ENCODE measurements at regions of chr5 and their contacts with region 1.

Region 1: DNA sequence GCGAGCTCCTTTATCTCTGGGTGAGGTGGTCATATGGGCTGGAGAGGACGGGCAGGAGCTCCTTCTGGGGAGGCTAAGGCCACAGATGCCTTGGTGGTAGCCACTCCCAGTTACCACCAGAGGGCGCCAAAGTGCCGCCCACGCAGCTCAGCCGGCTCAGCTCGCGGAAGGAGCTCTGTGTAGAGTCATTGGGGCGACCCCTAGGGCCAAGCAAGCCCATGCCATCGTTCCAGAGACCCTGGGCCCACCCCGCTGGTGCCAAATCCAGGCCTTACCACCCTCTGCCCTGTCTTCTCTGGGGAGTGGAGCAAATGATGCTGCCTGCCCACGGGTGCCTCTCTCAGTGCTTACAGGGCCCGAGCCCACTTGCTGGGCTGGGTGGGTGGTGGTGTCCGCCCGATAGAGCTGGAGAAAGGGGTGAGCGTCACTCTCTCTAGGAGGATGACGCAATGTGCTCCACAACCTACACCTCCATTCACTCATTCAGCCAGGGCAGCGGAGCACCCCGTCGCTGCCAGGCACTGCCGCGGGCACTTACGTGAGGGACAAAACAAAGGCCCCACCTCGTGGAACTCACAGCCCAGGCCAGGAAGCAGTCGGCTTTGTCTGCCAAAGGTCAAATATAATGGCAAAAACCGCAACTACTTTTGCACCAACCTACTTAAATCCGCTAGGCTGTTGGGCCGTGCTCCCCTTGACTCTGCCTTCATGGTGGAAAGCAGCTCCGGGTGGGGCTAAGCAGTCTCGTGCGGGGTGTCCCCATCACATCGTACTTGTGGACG is 13.8 kb downstream of the TSPAN17 start:
- DNase-seq: peak; percentile 79
- H3K4me3 ChIP-seq: no peak overlapping the region
- H3K27ac ChIP-seq: no peak overlapping the region
- H3K4me1 ChIP-seq: no peaks in the 10 kb centered on the region
- H3K27me3 ChIP-seq: no peaks in the 10 kb centered on the region
- CTCF ChIP-seq: peak; percentile 91

Region 2: DNA sequence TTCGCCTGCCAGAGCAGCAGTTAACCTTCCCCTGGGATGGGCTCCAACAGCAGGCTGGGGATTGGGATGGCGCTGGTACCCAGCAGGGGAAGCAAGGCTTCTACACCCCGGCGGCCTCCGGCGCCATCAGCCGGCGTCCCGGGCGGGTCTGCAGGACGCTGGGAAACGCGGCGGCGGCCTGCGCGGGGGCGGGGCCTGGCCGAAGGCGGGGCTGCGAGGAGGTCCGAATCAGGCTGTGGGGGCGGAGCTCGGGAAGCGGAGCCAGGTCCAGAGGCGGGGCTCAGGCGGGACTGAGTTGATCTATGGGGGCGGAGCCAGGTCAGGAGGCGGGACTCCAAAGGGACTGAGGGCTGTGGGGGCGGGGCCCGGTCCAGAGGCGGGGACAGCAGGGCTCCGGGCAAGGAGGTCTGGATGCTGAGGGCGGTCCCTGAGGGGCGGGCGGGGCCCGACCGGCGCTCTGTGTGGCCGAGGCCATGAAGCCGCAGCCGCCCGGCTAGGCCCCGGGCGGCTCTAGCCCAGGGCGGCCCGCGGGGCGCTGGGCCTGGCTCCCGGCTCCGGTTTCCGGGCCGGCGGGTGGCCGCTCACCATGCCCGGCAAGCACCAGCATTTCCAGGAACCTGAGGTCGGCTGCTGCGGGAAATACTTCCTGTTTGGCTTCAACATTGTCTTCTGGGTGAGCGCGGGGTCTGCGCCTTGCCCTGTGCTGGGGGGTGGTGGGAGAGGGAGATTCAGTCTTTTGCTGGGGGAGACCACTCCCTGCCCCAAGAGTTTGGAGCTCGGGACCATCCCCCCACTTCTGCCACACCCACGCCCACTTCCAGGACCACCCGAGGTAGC is 13.8 kb before region 1 on chr5 and contains the start of gene TSPAN17:
- CTCF ChIA-PET with region 1: interaction called, 11 read pairs
- POLR2A ChIA-PET with region 1: no interaction called
- intact Hi-C with region 1: no loop called
- DNase-seq: peak; percentile 97
- H3K4me3 ChIP-seq: peak within 1 kb of the TSS; percentile 79
- H3K27ac ChIP-seq: peak within 1 kb of the TSS; percentile 82
- H3K4me1 ChIP-seq: no peaks in the 10 kb centered on the region
- H3K27me3 ChIP-seq: no peaks in the 10 kb centered on the region
- CTCF ChIP-seq: peak; percentile 31; the same call in 1 of the 2 replicates
- total RNA-seq, gene TSPAN17: 23.3 and 27.8 TPM in 2 replicates

Region 3: DNA sequence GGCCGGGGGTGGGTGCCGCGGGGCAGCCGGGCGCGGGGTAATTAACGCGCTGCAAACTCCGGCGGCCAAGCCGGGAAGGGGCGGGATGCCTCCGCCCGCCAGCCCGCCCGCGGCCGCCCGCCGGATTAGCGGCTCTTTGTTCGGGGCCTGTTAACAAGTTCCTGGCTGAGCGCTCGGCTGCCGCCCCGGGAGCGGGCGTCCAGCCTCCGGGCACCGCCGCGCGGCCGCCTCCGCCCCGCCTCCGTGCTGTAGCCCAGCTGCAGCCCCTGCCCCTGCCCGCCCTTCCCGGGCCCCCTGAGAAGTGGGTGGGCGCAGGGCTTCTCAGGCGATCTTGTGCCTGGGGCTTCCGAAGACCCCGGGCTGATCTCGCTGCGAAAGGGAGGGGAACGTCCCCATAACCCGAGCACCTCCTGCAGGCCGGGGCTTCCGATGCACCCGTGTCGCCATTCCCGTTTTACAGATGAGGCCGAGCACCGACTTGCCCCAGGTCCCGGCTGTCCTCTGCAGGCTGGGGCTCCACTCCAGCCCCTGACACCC is 156.9 kb after region 1 on chr5:
- CTCF ChIA-PET with region 1: no interaction called
- POLR2A ChIA-PET with region 1: no interaction called
- intact Hi-C with region 1: loop called (anchors 2 kb)
- DNase-seq: peak; percentile 47
- H3K4me3 ChIP-seq: peak overlapping the region; percentile 49
- H3K27ac ChIP-seq: no peak overlapping the region
- H3K4me1 ChIP-seq: no peaks in the 10 kb centered on the region
- H3K27me3 ChIP-seq: no peaks in the 10 kb centered on the region
- CTCF ChIP-seq: peak; percentile 56

Region 4: DNA sequence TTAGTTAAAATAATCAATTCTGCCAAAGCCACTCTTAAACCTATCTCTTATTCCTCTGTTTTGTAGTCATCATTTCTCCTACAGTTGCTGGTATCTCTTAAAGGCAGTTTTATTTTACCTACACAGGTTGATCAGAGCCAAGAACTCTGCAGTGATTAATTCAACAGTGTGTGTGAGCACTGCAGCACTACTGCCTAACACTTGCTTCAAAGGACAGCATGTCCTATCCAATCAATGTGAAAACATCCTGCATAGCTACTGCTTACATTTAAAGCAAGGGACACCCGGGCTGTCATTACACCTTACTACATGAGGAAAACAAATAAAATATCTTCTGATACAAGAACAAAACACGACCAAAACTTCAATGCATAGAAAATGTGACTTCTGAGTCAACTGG is 283.2 kb after region 1 on chr5:
- CTCF ChIA-PET with region 1: no interaction called
- POLR2A ChIA-PET with region 1: no interaction called
- intact Hi-C with region 1: no loop called
- DNase-seq: no peak
- H3K4me3 ChIP-seq: no peak overlapping the region
- H3K27ac ChIP-seq: no peak overlapping the region
- H3K4me1 ChIP-seq: no peaks in the 10 kb centered on the region
- H3K27me3 ChIP-seq: no peaks in the 10 kb centered on the region
- CTCF ChIP-seq: no peak

Region 5: GRCh38 chr5:176959051-176959450 is 298.0 kb after region 1 on chr5:
- CTCF ChIA-PET with region 1: interaction called, 8 read pairs
- POLR2A ChIA-PET with region 1: no interaction called
- intact Hi-C with region 1: loop called (anchors 2 kb)
- DNase-seq: peak; percentile 48
- H3K4me3 ChIP-seq: no peak overlapping the region
- H3K27ac ChIP-seq: no peak overlapping the region
- H3K4me1 ChIP-seq: no peaks in the 10 kb centered on the region
- H3K27me3 ChIP-seq: no peaks in the 10 kb centered on the region
- CTCF ChIP-seq: peak; percentile 49

Region 6: DNA sequence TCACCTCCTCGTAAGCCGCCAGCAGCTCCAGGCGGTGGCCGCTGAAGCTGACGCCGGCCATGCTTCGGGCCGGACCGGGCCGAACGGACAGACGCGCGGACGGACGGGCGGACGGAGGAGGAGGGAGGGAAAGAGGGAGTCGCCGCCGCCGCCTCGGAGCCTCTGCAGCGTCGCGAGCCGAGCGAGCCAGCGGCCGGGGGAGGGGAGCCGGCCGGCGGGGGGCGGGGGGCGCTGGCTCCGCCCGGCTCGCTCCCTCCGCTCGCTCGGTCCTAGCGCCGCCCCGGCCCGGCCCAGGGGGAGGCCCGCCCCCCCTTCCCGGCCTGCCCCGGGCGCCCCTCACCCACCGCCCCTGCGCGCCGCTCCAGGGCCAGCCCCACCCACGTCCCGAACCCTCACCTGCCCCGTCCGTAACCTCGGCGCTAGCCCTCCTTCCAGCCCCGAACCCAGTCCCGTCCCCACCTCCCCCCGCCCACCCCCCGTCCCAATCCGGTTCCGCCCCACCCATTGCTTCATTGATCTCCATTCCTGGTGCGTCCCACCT is 812.5 kb after region 1 on chr5 and contains the start of gene DBN1:
- CTCF ChIA-PET with region 1: no interaction called
- POLR2A ChIA-PET with region 1: no interaction called
- intact Hi-C with region 1: no loop called
- DNase-seq: peak; percentile 72
- H3K4me3 ChIP-seq: peak within 1 kb of the TSS; percentile 96
- H3K27ac ChIP-seq: peak within 1 kb of the TSS; percentile 86
- H3K4me1 ChIP-seq: peaks cover 27% of the 10 kb centered on the region
- H3K27me3 ChIP-seq: no peaks in the 10 kb centered on the region
- CTCF ChIP-seq: no peak
- total RNA-seq, gene DBN1: 271 and 286 TPM in 2 replicates